KBM-7 (cell line): ENCODE measurements at regions of chr1 and their contacts with region 1.

Region 1: DNA sequence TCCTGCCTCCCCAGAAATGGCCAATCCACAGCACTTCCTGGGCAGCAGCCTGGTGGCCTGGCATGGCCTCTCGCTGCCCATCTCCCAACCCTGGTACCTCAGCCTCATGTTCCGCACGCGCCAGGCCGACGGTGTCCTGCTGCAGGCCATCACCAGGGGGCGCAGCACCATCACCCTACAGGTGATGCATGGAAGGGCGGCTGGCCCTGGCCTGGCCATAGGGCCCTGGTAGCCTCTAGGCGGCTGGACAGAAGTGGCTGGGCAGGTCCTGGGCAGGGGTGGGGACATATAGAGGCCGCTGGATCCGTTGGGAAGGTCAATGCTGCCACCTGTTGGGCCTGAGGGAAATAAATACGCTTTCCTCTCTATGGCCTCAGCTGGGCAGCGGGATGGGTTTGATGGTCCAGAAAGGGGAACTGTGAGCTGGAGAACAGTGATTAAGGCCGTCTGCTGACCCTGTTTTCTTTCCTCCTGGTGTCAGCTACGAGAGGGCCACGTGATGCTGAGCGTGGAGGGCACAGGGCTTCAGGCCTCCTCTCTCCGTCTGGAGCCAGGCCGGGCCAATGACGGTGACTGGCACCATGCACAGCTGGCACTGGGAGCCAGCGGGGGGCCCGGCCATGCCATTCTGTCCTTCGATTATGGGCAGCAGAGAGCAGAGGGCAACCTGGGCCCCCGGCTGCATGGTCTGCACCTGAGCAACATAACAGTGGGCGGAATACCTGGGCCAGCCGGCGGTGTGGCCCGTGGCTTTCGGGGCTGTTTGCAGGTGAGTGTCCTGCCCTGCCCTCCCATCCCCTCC is 14.5 kb downstream of the CELSR2 start:
- DNase-seq: peak; percentile 69

Region 2: GRCh38 chr1:109404838-109405237 is 141.0 kb after region 1 on chr1:
- in situ Hi-C with region 1: loop called (anchors 10 kb)
- DNase-seq: no peak